ENCODE measurements at regions of chr6 and their contacts with region 1.

Region 1: GRCh38 chr6:133568970-133569889 is 319.7 kb upstream of the TCF21 start:
- DNase-seq: peak in 1 of 2 donors; percentile 16
- ATAC-seq: peak; percentile 68 to 90 (median 80)
- H3K4me3 ChIP-seq: peak overlapping the region; percentile 5 to 56 (median 44)
- H3K27ac ChIP-seq: peak overlapping the region in 5 of 10 donors; percentile 10 to 45 (median 29)
- H3K4me1 ChIP-seq: peaks cover 0 to 7% (median 0%) of the 10 kb centered on the region in 9 donors
- H3K27me3 ChIP-seq: peaks cover 0 to 12% (median 0%) of the 10 kb centered on the region in 7 donors
- CTCF ChIP-seq: peak; percentile 57 to 92 (median 81)

Region 2: DNA sequence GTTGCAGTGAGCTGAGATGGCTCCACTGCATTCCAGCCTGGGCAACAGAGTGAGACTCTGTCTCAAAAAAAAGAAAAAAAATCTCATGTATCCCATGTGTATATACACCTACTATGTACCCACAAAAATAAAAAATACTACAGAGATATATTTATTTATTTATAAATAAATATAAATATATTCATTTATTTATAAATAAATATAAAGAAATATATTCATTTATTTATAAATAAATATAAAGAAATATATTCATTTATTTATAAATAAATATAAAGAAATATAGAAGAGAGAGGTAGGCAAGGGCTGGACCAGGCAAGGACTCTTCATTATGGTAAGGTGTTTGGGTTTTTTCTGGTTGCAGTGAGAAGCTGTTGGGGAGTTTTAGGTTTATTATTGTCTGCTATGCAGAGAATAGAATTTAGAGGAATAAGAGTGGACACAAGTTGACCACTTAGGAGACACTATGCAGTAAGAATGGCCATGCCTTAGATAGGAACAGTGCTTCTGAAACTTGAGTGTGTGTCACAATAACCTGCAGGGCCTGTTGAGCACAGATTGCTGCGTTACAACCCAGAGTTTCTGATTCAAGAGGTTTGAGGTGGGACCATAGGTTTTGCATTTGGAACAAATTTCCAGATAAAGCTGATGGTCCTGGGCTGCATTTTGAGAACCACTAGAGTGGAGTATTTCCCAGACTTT is 73.9 kb before region 1 on chr6:
- intact Hi-C with region 1: no loop called
- DNase-seq: no peak
- ATAC-seq: no peak
- H3K4me3 ChIP-seq: no peak overlapping the region
- H3K27ac ChIP-seq: no peak overlapping the region
- H3K4me1 ChIP-seq: peaks cover 0 to 3% (median 0%) of the 10 kb centered on the region in 9 donors
- H3K27me3 ChIP-seq: no peaks in the 10 kb centered on the region
- CTCF ChIP-seq: no peak

Region 3: GRCh38 chr6:133837801-133838349 is 268.6 kb after region 1 on chr6:
- intact Hi-C with region 1: loop called in 1 of 10 experiments (anchors 5 kb)
- DNase-seq: peak in 1 of 2 donors; percentile 38
- ATAC-seq: peak in 2 of 8 donors; percentile 63 to 65
- H3K4me3 ChIP-seq: peak overlapping the region in 8 of 10 donors; percentile 21 to 46 (median 36)
- H3K27ac ChIP-seq: no peak overlapping the region
- H3K4me1 ChIP-seq: peaks cover 0 to 6% (median 0%) of the 10 kb centered on the region in 9 donors
- H3K27me3 ChIP-seq: peaks cover 0 to 39% (median 17%) of the 10 kb centered on the region in 7 donors
- CTCF ChIP-seq: peak in 8 of 9 donors; percentile 8 to 69 (median 56)

Measured in heart right ventricle (tissue), 16 donors.